Activated B cell treated with CpG ODN at 0.5 μM for 24 hours (primary cell): ENCODE measurements at regions of chr20 and their contacts with region 1.

Region 1: DNA sequence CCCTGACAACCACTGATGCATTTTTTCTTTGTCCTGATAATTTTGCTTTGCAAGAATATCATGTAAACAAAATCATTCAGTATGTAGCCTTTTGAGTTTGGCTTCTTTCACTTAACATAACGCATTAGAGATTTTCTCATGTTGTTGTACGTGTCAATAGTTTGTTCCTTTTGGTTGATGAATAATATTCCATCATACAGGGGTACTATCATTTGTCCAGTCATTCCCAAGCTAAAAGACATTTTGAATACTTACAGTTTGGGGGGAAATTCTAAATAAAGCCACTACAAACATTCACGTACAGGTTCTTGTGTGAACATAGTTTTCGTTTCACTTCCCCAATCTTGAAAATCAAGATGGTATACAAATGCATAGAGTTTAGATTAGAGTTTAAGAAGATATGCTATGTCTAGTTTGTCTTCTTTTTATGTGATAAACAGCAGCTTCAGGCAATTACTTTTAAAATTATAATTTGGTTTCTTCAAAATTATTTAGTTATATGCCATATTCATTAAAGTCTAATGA is 5.2 kb downstream of the HAO1 start:
- DNase-seq: no peak
- ATAC-seq: no peak
- H3K4me3 Mint-ChIP-seq: no peak overlapping the region
- H3K27ac Mint-ChIP-seq: no peak overlapping the region
- H3K4me1 Mint-ChIP-seq: peaks cover 15% of the 10 kb centered on the region
- H3K27me3 Mint-ChIP-seq: peaks cover 2% of the 10 kb centered on the region
- CTCF ChIP-seq: no peak

Region 2: GRCh38 chr20:8389381-8390036 is 454.4 kb after region 1 on chr20:
- CTCF ChIA-PET with region 1: interaction called, 3 read pairs
- POLR2A ChIA-PET with region 1: no interaction called
- intact Hi-C with region 1: loop called (anchors 1 kb)
- DNase-seq: no peak
- ATAC-seq: no peak
- H3K4me3 Mint-ChIP-seq: no peak overlapping the region
- H3K27ac Mint-ChIP-seq: no peak overlapping the region
- H3K4me1 Mint-ChIP-seq: no peaks in the 10 kb centered on the region
- H3K27me3 Mint-ChIP-seq: no peaks in the 10 kb centered on the region
- CTCF ChIP-seq: peak; percentile 39